ENCODE measurements at regions of chr1 and their contacts with region 1.

Region 1: DNA sequence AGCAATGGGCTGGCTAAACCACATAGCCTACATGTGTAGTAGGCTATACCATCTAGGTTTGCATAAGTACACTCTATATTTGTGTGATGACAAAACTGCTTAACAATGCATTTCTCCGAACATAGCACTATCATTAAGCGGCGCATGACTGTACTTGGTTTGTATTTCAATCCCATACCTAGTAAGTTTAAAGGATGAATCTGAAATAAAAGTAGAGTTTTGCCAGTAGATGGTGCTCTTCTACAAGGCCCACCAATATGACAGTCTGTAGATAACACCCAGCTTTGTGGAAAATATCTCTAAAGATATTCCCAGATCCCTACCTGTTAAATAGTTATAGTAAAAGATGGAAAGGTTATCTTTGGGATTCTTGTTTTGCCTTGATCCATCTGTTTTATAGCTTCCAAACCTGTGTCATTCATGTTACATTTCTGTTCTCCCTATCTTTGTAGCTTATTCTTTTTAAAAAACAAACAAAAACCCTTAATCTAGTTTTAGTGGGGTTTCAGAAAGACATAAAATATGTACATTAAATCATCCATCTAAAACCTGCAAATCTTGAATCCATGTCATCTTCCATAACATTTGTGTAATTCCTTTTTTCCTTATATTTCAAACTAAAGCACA is 33.9 kb upstream of the ASPM start:
- DNase-seq: no peak
- H3K4me3 Mint-ChIP-seq: no peak overlapping the region
- H3K27ac Mint-ChIP-seq: no peak overlapping the region
- H3K4me1 Mint-ChIP-seq: peaks cover 5% of the 10 kb centered on the region
- H3K27me3 Mint-ChIP-seq: no peaks in the 10 kb centered on the region

Region 2: DNA sequence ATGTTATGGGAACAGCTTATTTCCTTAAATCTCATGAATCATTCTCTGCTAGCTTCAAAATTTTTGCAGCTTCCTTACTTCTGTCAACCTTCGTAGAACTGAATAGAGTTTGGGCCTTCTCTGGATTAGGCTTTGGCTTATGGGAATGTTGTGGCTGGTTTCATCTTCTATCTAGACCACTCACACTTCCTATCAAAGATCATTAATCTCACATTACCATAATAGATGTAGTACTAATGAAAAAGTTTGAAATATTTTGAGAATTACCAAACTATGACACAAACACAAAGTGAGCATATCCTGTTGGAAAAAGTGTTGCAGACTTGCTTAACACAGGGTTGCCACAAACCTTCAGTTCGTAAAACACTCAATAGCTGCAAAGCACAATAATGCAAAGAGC is 64.2 kb before region 1 on chr1:
- intact Hi-C with region 1: no loop called
- DNase-seq: no peak
- H3K4me3 Mint-ChIP-seq: no peak overlapping the region
- H3K27ac Mint-ChIP-seq: no peak overlapping the region
- H3K4me1 Mint-ChIP-seq: peaks cover 5% of the 10 kb centered on the region
- H3K27me3 Mint-ChIP-seq: no peaks in the 10 kb centered on the region

Region 3: GRCh38 chr1:197146197-197146889 is 34.0 kb before region 1 on chr1 and contains the start of gene ASPM:
- intact Hi-C with region 1: loop called (anchors 5 kb)
- DNase-seq: peak; percentile 93
- H3K4me3 Mint-ChIP-seq: peak within 1 kb of the TSS; percentile 86
- H3K27ac Mint-ChIP-seq: peak within 1 kb of the TSS; percentile 93
- H3K4me1 Mint-ChIP-seq: peaks cover 29% of the 10 kb centered on the region
- H3K27me3 Mint-ChIP-seq: no peaks in the 10 kb centered on the region
- total RNA-seq, gene ASPM: 26.8 and 27.5 TPM in 2 replicates

Region 4: GRCh38 chr1:197339106-197340060 is 159.0 kb after region 1 on chr1:
- intact Hi-C with region 1: loop called (anchors 1 kb)
- DNase-seq: no peak
- H3K4me3 Mint-ChIP-seq: no peak overlapping the region
- H3K27ac Mint-ChIP-seq: no peak overlapping the region
- H3K4me1 Mint-ChIP-seq: peaks cover 16% of the 10 kb centered on the region
- H3K27me3 Mint-ChIP-seq: peaks cover 2% of the 10 kb centered on the region

Region 5: DNA sequence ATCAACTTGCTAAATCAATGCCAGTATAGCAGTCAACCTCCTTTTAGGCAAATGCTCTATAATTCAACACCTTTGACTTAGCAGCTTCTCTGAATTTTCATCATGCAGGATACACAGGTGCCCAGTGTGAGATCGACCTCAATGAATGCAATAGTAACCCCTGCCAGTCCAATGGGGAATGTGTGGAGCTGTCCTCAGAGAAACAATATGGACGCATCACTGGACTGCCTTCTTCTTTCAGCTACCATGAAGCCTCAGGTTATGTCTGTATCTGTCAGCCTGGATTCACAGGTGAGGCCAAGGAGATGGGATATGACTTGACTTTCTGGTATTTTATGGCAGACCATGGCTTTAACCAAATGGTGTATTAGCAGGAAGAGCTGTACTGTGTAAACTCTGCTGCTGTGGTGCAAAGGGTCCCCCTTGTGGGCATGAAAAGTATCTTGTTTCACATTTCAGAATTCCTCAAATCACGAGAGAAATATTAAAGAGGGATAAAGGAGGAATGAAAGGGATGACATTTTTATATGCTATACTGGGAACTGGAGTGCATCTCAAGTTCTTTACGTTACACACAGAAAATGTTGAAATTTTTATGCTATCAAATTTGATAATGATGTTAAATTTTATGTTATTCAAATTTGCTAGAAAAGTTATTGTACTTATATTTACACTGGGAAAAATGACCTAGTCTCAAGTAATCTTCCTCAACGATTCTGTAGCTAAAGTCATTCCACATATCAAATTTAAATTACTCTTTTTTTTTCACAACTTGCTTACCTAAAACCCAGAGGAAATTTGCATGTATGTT is 176.6 kb after region 1 on chr1:
- intact Hi-C with region 1: loop called (anchors 1 kb)
- DNase-seq: no peak
- H3K4me3 Mint-ChIP-seq: no peak overlapping the region
- H3K27ac Mint-ChIP-seq: no peak overlapping the region
- H3K4me1 Mint-ChIP-seq: no peaks in the 10 kb centered on the region
- H3K27me3 Mint-ChIP-seq: no peaks in the 10 kb centered on the region

Region 6: GRCh38 chr1:197481101-197481500 is 300.7 kb after region 1 on chr1:
- intact Hi-C with region 1: no loop called
- DNase-seq: peak; percentile 14
- H3K4me3 Mint-ChIP-seq: no peak overlapping the region
- H3K27ac Mint-ChIP-seq: no peak overlapping the region
- H3K4me1 Mint-ChIP-seq: peaks cover 14% of the 10 kb centered on the region
- H3K27me3 Mint-ChIP-seq: peaks cover 3% of the 10 kb centered on the region